Endothelial cell of umbilical vein (primary cell): ENCODE measurements at regions of chr5 and their contacts with region 1.

Region 1: DNA sequence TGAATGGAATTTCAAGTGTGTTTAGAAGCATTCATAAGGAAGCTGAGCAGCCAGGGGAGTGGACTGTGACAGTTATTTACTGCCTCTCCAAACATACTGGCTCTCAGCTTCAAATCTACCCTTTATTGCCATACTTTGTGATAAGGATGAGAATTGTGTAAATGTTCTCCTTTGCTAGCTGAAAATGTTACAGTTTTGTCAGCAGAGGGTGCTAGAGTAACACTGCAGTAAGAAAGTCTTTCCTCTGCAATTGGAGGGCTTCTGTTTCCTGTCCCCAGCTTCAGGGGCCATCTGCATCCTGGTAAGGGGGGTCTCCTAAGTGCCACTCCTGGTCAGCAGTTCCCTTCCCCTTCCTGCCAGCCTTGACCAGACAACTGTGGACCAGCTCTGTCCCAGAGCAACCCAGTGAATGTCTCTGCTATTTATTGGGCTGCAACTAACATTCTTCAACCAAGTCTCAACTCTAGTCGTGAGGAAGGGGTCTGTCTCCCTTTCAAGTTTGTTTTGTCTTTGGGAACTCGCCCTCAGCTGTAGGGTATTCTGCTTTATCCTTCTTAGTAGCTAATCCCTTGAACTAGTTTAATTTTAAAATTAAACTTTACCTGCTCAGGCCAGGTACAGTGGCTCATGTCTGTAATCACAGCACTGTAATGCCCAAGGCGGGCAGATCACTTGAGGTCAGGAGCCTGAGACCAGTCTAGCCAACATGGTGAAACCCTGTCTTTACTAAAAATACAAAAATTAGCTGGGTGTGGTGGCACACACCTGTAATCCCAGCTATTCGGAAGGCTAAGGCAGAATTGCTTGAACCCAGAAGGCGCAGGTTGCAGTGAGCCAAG is 45.3 kb downstream of the RAPGEF6 start:
- DNase-seq: peak; percentile 73
- H3K4me3 ChIP-seq: no peak overlapping the region
- H3K27ac ChIP-seq: no peak overlapping the region
- H3K4me1 ChIP-seq: no peaks in the 10 kb centered on the region
- H3K27me3 ChIP-seq: no peaks in the 10 kb centered on the region
- CTCF ChIP-seq: peak; percentile 65 to 76
- POLR2A ChIP-seq: no peak

Region 2: DNA sequence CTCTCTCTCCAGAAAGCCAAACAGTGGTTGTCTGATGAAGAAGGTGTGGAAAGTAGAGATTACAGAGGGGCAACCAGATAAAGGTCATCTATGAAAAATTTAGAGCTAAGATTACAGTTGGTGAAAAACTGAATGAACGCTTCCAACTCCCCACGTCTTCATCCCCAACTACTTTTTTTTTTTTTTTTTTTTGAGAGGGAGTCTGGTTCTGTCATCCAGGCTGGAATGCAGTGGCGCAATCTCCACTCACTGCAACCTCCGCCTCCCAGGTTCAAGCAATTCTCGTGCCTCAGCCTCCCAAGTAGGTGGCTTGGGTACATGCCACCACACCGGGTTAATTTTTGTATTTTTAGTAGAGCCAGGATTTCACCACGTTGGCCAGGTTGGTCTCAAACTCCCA is 19.0 kb before region 1 on chr5:
- CTCF ChIA-PET with region 1: interaction called, 11 read pairs
- POLR2A ChIA-PET with region 1: no interaction called
- dilution Hi-C with region 1: no loop called
- intact Hi-C with region 1: no loop called
- DNase-seq: no peak
- H3K4me3 ChIP-seq: no peak overlapping the region
- H3K27ac ChIP-seq: no peak overlapping the region
- H3K4me1 ChIP-seq: no peaks in the 10 kb centered on the region
- H3K27me3 ChIP-seq: no peaks in the 10 kb centered on the region
- CTCF ChIP-seq: no peak
- POLR2A ChIP-seq: no peak

Region 3: GRCh38 chr5:131634996-131635754 is 45.4 kb after region 1 on chr5 and contains the start of gene RAPGEF6:
- CTCF ChIA-PET with region 1: interaction called, 17 read pairs
- POLR2A ChIA-PET with region 1: no interaction called
- dilution Hi-C with region 1: no loop called
- intact Hi-C with region 1: loop called (anchors 1 kb)
- DNase-seq: peak; percentile 99
- H3K4me3 ChIP-seq: peak within 1 kb of the TSS; percentile 52 to 82 (median 56)
- H3K27ac ChIP-seq: peak within 1 kb of the TSS; percentile 95
- H3K4me1 ChIP-seq: peaks cover 16% of the 10 kb centered on the region
- H3K27me3 ChIP-seq: no peaks in the 10 kb centered on the region
- CTCF ChIP-seq: peak in 1 of 2 donors; percentile 3
- POLR2A ChIP-seq: peak; percentile 76
- total RNA-seq, gene RAPGEF6: 13.9 and 17.5 TPM in 2 replicates

Region 4: DNA sequence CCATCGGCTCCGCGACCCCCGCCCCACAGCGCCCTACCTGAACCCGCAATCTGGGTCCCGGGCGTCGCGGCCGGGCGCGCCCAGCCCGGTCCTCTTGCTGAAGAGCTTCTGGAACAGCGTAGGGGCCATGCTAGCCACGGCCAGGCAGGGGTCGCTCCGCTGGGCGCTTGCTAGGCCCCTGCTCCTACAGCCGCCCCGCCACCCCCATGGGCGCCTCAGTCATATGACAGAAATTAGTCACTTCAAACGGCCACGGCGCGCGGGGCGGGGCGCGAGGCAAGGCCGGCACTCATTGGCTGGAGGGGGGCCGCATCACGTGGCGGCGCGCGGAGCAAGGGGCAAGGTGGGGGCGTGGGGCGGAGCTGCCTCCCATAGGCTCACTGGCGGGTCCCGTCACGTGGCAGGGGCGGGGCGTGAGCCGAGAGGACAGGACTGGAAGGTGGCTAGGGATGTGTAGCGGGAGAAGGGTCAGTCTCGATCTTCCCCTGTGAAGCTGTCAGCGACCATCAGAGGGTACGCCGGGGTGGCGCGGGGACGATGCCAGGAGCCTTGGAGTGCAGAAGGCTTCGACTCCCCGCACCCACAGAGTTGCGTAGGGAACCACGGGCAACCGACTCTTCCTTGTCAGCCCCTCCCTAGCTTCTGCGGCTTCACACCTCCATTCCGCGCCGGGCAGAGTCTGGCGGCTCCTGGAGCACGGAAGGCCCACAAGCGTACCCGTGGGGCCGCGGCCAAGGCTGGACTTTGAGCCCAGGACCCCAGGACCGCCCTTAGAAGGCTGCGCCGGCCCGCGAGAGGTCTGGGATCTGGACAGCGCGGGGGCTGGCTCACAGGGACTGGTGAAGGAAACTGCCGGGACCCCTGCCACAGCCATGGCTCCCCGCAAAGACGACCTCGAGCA is 207.3 kb after region 1 on chr5 and contains the start of gene FNIP1:
- CTCF ChIA-PET with region 1: interaction called, 8 read pairs
- POLR2A ChIA-PET with region 1: no interaction called
- dilution Hi-C with region 1: no loop called
- intact Hi-C with region 1: loop called (anchors 5 kb)
- DNase-seq: peak; percentile 99
- H3K4me3 ChIP-seq: peak within 1 kb of the TSS; percentile 63 to 96 (median 69)
- H3K27ac ChIP-seq: peak within 1 kb of the TSS; percentile 94
- H3K4me1 ChIP-seq: peaks cover 16% of the 10 kb centered on the region
- H3K27me3 ChIP-seq: no peaks in the 10 kb centered on the region
- CTCF ChIP-seq: no peak
- POLR2A ChIP-seq: peak; percentile 78
- total RNA-seq, gene FNIP1: 25.6 and 27.3 TPM in 2 replicates

Region 5: GRCh38 chr5:131999441-132000240 is 409.9 kb after region 1 on chr5:
- CTCF ChIA-PET with region 1: interaction called, 323 read pairs
- POLR2A ChIA-PET with region 1: no interaction called
- dilution Hi-C with region 1: loop called (anchors 25 kb)
- intact Hi-C with region 1: no loop called
- DNase-seq: no peak
- H3K4me3 ChIP-seq: no peak overlapping the region
- H3K27ac ChIP-seq: no peak overlapping the region
- H3K4me1 ChIP-seq: peaks cover 17% of the 10 kb centered on the region
- H3K27me3 ChIP-seq: no peaks in the 10 kb centered on the region
- CTCF ChIP-seq: no peak
- POLR2A ChIP-seq: no peak